Dorsolateral prefrontal cortex (tissue), 120 donors: ENCODE measurements at regions of chr19 and their contacts with region 1.

Region 1: DNA sequence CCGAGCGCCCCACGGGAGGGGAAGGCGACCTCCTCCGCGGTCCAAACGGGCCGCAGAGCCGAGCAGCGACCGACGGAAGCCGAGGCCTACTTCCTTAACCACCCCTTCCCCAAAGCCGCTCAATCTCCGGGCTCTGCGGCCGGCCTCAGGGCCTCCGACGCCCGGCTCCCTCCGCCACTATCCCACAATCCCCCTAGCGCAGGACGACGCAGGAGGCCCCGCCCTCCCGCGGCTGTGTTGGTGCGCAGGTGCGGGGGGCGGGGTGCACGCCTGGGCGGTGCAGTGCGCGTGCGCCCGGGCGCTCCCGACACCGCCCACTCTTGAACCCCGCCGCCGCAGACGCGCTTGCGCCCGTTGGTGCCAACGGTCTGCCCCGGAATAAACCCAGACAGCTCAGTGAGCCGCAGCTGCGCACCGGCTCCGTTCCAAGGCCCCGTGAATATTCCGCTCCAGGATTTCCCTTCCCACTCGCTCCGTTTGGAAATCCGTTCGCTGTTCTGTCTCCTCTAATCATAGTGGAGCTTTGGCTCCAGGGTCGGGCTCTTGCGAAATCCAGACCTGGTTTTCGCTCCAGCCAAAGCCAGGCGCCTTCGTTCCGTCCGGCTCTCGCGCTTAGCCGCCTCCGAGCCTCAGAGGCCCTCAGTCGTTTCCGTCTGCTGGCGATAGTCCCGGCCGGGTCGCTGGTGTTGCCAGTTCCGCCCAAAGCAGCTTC is at the start of gene PPP6R1:
- DNase-seq: peak; percentile 93 to 97 (median 96)
- H3K4me3 ChIP-seq: peak within 1 kb of the TSS; percentile 59 to 100 (median 94)
- H3K27ac ChIP-seq: peak within 1 kb of the TSS; percentile 76 to 99 (median 95)
- H3K27me3 ChIP-seq: no peaks in the 10 kb centered on the region
- CTCF ChIP-seq: peak in 26 of 56 donors; percentile 9 to 55 (median 22)
- total RNA-seq, gene PPP6R1: 67.4 to 169 (median 95.4) TPM

Region 2: GRCh38 chr19:55166530-55167268 is 92.3 kb before region 1 on chr19 and contains the start of gene DNAAF3:
- intact Hi-C with region 1: loop called in 1 of 2 experiments (anchors 5 kb)
- DNase-seq: peak; percentile 71 to 96 (median 91)
- H3K4me3 ChIP-seq: peak within 1 kb of the TSS in 58 of 59 donors; percentile 14 to 67 (median 48)
- H3K27ac ChIP-seq: no peak within 1 kb of the TSS
- H3K27me3 ChIP-seq: peaks cover 0 to 86% (median 44%) of the 10 kb centered on the region in 45 donors
- CTCF ChIP-seq: no peak
- total RNA-seq, gene DNAAF3: 0.28 to 3.9 (median 1.0) TPM in 74 of 120 experiments, not detected in the others

Region 3: DNA sequence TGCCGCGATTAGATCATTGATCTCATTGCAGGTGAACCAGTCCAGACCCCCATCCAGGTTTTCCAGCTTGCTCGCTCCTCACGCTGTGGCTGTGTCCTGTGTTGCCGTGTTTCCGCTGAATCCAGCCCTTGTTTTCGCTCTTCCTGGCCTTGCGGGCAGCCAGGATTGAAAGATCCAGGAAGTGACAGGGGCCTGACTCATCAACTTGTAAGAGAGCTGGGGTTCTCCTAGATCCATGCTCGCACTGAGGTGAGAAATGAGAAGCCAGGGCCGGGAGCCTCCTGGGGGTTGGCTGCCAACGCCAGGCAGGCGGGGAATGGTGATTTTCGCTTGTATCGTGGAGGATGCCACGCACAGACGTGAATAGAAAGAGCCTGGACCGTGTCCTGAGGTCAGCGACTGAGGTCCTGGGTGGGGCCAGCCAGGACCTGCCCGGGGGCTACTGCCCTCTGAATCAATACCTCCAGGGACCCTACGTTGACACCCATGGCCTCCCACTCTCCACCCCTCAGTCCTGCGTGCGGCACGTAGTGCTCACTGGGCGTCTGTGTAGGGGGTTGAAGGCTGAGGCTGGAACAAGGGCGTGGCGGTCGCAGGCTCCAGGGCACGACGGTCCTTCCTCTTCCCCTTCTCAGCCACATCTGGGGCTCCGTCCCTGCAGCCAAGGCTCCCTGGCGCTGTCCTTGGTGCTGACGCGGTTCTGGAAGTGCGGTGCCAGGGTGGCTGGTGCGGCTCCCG is 42.4 kb before region 1 on chr19:
- intact Hi-C with region 1: loop called (anchors 1 to 2 kb)
- DNase-seq: peak; percentile 58 to 94 (median 86)
- H3K4me3 ChIP-seq: peak overlapping the region; percentile 28 to 86 (median 68)
- H3K27ac ChIP-seq: peak overlapping the region; percentile 28 to 93 (median 83)
- H3K27me3 ChIP-seq: no peaks in the 10 kb centered on the region
- CTCF ChIP-seq: no peak

Region 4: DNA sequence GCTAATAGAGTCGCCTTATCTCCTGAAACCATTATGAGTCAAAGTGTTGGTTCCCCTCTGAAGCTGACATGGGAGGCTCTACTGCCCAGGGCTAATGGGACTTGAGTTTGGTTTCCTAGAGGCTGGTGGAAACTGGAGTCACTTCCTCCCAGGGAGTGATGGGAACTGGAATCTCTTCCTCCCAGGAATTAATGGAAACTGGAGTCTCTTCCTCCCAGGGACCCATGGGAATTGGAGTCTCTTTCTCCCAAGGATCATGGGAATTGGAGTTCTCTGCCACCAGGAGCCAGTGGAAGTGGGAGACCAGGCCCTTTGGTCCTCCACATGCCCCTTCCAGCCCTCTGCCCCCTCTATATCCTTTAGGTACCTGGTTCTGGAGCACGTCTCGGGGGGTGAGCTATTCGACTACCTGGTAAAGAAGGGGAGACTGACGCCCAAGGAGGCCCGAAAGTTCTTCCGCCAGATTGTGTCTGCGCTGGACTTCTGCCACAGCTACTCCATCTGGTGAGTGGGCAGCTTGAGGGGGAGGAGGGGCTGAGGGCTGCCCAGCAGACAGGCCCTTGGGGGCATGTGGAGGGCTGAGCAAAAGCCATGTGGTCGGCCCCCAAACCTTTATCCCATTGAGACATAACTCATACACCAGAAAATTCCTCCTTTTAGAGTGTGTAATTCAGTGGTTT is 30.3 kb after region 1 on chr19:
- intact Hi-C with region 1: loop called in 1 of 2 experiments (anchors 1 kb)
- DNase-seq: no peak
- H3K4me3 ChIP-seq: peak overlapping the region in 10 of 59 donors; percentile 6 to 78 (median 42)
- H3K27ac ChIP-seq: peak overlapping the region in 57 of 59 donors; percentile 72 to 100 (median 96)
- H3K27me3 ChIP-seq: no peaks in the 10 kb centered on the region
- CTCF ChIP-seq: no peak